MCF 10A (cell line): ENCODE measurements at regions of chr6 and their contacts with region 1.

Region 1: DNA sequence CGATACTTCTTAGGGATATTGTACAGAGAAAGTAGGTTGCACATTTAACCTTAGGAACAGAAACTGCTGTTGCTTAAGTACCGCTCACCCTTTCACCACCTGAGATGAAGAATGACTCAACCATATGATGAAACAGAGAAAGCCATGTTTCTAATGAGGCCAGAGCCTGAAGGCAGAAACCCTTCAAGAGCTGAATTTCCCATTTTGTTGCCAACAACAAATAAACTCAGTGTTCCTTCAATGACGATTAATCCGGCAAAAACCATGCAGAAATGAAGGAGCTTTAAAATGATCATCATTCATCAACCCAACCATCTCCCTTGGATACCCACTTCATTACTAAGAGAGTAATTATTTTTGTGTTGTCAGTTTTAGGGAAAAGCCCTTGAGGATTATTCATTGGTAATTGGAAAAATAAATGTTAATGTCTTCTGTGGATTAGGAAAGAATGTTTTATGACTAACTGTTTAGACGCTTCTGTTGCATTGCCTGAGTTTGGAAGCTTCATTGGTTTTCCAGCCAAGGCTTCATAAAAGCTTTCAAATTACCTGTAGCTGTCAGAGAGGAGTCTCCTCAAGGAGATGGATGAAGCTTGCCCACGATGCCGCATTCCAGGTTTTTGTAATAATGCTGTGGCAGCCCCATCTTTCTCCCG is 112.1 kb upstream of the IYD start:
- DNase-seq: peak; percentile 97
- H3K4me3 Mint-ChIP-seq: peak overlapping the region; percentile 44
- H3K27ac Mint-ChIP-seq: peak overlapping the region; percentile 93
- H3K4me1 Mint-ChIP-seq: peaks cover 48% of the 10 kb centered on the region
- H3K27me3 Mint-ChIP-seq: no peaks in the 10 kb centered on the region
- CTCF ChIP-seq: no peak

Region 2: GRCh38 chr6:150153542-150153876 is 103.2 kb before region 1 on chr6:
- CTCF ChIA-PET with region 1: interaction called, 6 read pairs
- POLR2A ChIA-PET with region 1: interaction called, 73 read pairs
- intact Hi-C with region 1: no loop called
- DNase-seq: no peak
- H3K4me3 Mint-ChIP-seq: peak overlapping the region; percentile 25
- H3K27ac Mint-ChIP-seq: peak overlapping the region; percentile 77
- H3K4me1 Mint-ChIP-seq: peaks cover 52% of the 10 kb centered on the region
- H3K27me3 Mint-ChIP-seq: no peaks in the 10 kb centered on the region
- CTCF ChIP-seq: no peak

Region 3: DNA sequence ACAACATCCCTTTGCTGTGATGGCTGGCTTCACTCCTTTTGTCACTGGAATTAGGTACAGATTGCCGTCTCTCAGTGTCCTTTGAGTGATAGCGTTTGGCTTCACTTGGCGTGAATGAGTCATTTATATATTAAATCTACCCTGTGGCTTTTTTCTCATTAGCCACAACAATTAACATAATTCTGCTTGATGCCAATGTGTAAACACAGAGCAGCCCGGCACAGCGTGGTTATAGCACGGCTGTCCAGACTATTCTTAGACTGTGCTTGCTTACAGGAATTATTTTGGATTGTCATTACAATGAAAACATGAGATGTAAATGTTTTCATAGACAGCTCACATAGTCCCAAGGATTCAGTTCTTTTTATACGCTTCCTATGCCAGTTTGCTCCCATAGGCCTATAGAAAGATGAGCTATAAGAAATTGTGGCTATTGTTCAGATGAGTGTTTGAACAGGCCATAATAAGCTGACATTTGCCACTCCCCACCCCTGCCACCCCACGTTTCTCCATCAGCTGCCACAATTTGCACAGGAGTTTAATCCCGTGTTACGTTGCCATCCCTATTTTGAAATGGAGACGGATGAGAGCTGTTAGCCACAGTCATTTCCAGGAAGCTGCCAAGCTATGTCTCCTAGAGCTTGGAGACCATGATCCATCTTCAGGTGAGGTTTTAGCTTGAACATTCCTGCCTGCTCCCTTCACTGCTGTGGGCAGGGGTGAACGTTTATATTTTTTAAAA is 48.0 kb before region 1 on chr6:
- CTCF ChIA-PET with region 1: no interaction called
- POLR2A ChIA-PET with region 1: interaction called, 16 read pairs
- intact Hi-C with region 1: no loop called
- DNase-seq: no peak
- H3K4me3 Mint-ChIP-seq: no peak overlapping the region
- H3K27ac Mint-ChIP-seq: peak overlapping the region; percentile 14
- H3K4me1 Mint-ChIP-seq: peaks cover 28% of the 10 kb centered on the region
- H3K27me3 Mint-ChIP-seq: no peaks in the 10 kb centered on the region
- CTCF ChIP-seq: no peak

Region 4: GRCh38 chr6:150267686-150268561 is 11.2 kb after region 1 on chr6:
- CTCF ChIA-PET with region 1: interaction called, 15 read pairs
- POLR2A ChIA-PET with region 1: interaction called, 282 read pairs
- intact Hi-C with region 1: loop called (anchors 1 kb)
- DNase-seq: peak; percentile 77
- H3K4me3 Mint-ChIP-seq: no peak overlapping the region
- H3K27ac Mint-ChIP-seq: peak overlapping the region; percentile 92
- H3K4me1 Mint-ChIP-seq: peaks cover 51% of the 10 kb centered on the region
- H3K27me3 Mint-ChIP-seq: no peaks in the 10 kb centered on the region
- CTCF ChIP-seq: no peak

Region 5: GRCh38 chr6:150301846-150302519 is 45.2 kb after region 1 on chr6:
- CTCF ChIA-PET with region 1: interaction called, 5 read pairs
- POLR2A ChIA-PET with region 1: interaction called, 33 read pairs
- intact Hi-C with region 1: loop called (anchors 1 kb)
- DNase-seq: peak; percentile 67
- H3K4me3 Mint-ChIP-seq: no peak overlapping the region
- H3K27ac Mint-ChIP-seq: peak overlapping the region; percentile 14
- H3K4me1 Mint-ChIP-seq: peaks cover 20% of the 10 kb centered on the region
- H3K27me3 Mint-ChIP-seq: no peaks in the 10 kb centered on the region
- CTCF ChIP-seq: no peak